SK-N-SH (cell line): ENCODE measurements at regions of chr2 and their contacts with region 1.

Region 1: DNA sequence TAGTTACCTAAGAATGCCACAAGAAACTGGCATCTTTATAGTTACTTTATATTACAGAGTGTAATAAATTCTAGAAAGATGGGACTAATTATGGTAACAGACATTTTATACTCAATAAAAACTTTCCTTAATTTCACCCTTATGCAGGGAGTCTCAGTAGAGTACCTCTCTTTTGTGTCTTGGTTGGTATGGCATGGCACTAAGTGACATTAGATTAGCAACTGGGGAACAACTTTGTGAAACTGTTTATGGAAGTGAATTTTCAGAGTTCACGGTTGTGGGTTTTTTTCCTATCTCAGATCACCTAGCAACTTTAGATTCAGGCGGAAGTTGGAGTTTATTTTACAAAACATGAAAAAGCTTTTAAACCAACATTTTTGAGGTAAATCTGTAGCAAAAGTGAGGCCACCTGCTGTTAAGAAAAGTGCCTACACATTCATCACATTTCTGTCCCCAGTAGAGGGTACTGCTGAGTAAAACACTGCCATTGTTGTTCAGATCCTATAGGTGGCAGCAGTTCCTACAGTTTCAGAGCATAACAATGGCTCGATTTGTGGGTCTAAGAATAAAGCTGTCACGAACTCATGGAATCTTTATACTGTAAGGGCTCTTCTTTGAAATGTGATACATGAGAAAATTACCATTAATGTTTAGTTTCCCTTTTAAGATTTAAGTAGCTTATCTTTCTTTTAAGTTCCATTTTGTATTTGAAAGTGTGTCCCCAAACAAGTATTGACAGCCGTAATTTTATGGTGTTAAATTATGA is 117.6 kb downstream of the CAMKMT start:
- DNase-seq: peak; percentile 81
- H3K4me3 ChIP-seq: peak overlapping the region in 1 of 2 experiments; percentile 23; a peak in 1 of 4 replicates
- H3K27ac ChIP-seq: peak overlapping the region in 1 of 2 experiments; percentile 65; a peak in 2 of 4 replicates
- H3K4me1 ChIP-seq: peaks cover 0 to 12% of the 10 kb centered on the region in 2 experiments; a peak in 2 of 4 replicates
- H3K27me3 ChIP-seq: no peaks in the 10 kb centered on the region
- CTCF ChIP-seq: peak; percentile 100
- EP300 ChIP-seq: peak; percentile 15 to 49; a peak in 1 of 4 replicates
- RAD21 ChIP-seq: peak; percentile 100

Region 2: DNA sequence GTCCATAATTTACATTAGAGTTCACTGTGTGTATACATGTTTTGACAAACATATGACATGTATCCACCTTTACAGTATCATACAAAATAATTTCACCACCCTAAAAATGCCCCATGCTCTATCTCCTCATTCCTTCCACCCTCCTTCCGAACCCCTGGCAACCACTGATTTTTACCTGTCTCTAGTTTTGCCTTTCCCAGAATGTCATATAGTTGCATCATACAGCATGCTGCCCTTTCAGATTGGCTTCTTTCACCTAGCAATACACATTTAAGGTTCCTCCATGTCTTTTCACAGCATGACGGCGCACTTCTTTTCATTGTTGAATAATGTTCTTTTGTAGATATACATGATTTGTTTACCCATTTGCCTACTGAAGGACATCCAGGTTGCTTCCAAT is 493.9 kb before region 1 on chr2:
- CTCF ChIA-PET with region 1: no interaction called
- POLR2A ChIA-PET with region 1: no interaction called
- DNase-seq: no peak
- H3K4me3 ChIP-seq: no peak overlapping the region
- H3K27ac ChIP-seq: no peak overlapping the region
- H3K4me1 ChIP-seq: no peaks in the 10 kb centered on the region
- H3K27me3 ChIP-seq: no peaks in the 10 kb centered on the region
- CTCF ChIP-seq: no peak
- EP300 ChIP-seq: no peak
- RAD21 ChIP-seq: no peak

Region 3: DNA sequence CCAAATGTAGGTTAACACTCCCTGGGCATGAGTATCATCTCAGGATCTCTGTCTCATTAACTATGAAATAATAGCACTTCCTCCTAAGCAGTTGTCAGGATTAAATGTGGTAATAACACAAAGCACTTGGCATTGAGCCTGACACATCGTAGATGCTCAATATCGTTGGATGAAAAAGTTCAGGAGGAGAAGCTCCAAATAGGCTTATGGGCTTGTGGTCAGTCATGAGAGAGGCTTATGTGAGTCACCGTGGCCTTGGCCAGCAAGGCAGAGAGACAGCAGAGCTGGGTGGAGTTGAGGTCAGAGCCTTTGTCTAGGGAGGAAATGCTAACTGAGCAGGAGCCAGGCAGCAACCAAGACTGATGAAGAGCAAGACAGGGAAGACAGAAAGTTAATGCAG is 379.0 kb before region 1 on chr2:
- CTCF ChIA-PET with region 1: no interaction called
- POLR2A ChIA-PET with region 1: no interaction called
- DNase-seq: no peak
- H3K4me3 ChIP-seq: no peak overlapping the region
- H3K27ac ChIP-seq: peak overlapping the region in 1 of 2 experiments; percentile 23; a peak in 2 of 4 replicates
- H3K4me1 ChIP-seq: peaks cover 0 to 4% of the 10 kb centered on the region in 2 experiments; a peak in 3 of 4 replicates
- H3K27me3 ChIP-seq: no peaks in the 10 kb centered on the region
- CTCF ChIP-seq: no peak
- EP300 ChIP-seq: peak in 1 of 2 experiments; percentile 52; a peak in 1 of 4 replicates
- RAD21 ChIP-seq: no peak

Region 4: GRCh38 chr2:44286517-44287245 is 192.6 kb before region 1 on chr2:
- CTCF ChIA-PET with region 1: no interaction called
- POLR2A ChIA-PET with region 1: no interaction called
- DNase-seq: no peak
- H3K4me3 ChIP-seq: no peak overlapping the region
- H3K27ac ChIP-seq: no peak overlapping the region
- H3K4me1 ChIP-seq: peaks cover 3 to 9% of the 10 kb centered on the region in 2 experiments; a peak in 2 of 4 replicates
- H3K27me3 ChIP-seq: 0 out of 2 replicates have a peak, but pooled peaks cover 4% of the 10 kb centered on the region
- CTCF ChIP-seq: no peak
- EP300 ChIP-seq: no peak
- RAD21 ChIP-seq: no peak

Region 5: GRCh38 chr2:44377486-44377885 is 101.8 kb before region 1 on chr2:
- CTCF ChIA-PET with region 1: interaction called, 12 read pairs
- POLR2A ChIA-PET with region 1: no interaction called
- DNase-seq: no peak
- H3K4me3 ChIP-seq: no peak overlapping the region
- H3K27ac ChIP-seq: no peak overlapping the region
- H3K4me1 ChIP-seq: no peaks in the 10 kb centered on the region
- H3K27me3 ChIP-seq: no peaks in the 10 kb centered on the region
- CTCF ChIP-seq: no peak
- EP300 ChIP-seq: no peak
- RAD21 ChIP-seq: no peak

Region 6: GRCh38 chr2:44498551-44498950 is 19.2 kb after region 1 on chr2:
- CTCF ChIA-PET with region 1: interaction called, 95 read pairs
- POLR2A ChIA-PET with region 1: no interaction called
- DNase-seq: no peak
- H3K4me3 ChIP-seq: no peak overlapping the region
- H3K27ac ChIP-seq: peak overlapping the region in 1 of 2 experiments; percentile 1; a peak in 1 of 4 replicates
- H3K4me1 ChIP-seq: no peaks in the 10 kb centered on the region
- H3K27me3 ChIP-seq: no peaks in the 10 kb centered on the region
- CTCF ChIP-seq: no peak
- EP300 ChIP-seq: no peak
- RAD21 ChIP-seq: no peak

Region 7: GRCh38 chr2:44602446-44602845 is 123.1 kb after region 1 on chr2:
- CTCF ChIA-PET with region 1: interaction called, 28 read pairs
- POLR2A ChIA-PET with region 1: no interaction called
- DNase-seq: no peak
- H3K4me3 ChIP-seq: no peak overlapping the region
- H3K27ac ChIP-seq: no peak overlapping the region
- H3K4me1 ChIP-seq: peaks cover 0 to 17% of the 10 kb centered on the region in 2 experiments; a peak in 2 of 4 replicates
- H3K27me3 ChIP-seq: no peaks in the 10 kb centered on the region
- CTCF ChIP-seq: no peak
- EP300 ChIP-seq: no peak
- RAD21 ChIP-seq: no peak

Region 8: DNA sequence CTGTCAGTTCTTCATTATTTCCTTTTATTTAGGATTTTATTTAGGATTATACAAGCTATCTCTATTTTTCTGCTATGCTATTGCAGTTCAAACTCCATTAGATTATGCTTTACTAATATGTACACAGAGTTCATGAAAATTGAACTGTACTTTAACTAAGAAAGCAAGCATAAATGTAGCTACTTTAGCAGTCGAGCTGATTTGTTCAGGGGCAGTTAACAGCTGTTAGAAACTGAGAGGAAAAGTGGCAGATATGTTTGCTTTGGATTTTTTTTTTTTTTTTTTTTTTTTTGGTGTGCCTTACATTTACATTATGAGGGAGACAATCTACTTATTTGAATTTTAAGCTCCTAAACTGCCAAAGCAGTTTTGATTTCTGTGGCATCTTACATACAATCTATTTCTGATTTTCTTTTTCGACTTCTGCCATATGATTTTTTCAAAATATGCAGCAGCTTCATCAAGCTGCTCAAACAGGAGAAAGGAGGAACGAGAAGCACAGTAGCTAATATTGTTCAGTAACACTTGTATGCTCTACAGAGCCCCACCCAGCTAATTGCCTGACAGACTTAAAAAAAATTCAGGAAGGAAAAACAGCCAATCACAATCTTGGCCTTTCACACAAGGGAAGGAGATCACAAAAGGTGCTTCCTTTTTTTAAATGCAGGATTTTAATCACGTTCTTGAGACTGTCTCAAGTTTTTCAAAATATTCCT is 228.8 kb after region 1 on chr2:
- CTCF ChIA-PET with region 1: interaction called, 147 read pairs
- POLR2A ChIA-PET with region 1: interaction called, 3 read pairs
- DNase-seq: no peak
- H3K4me3 ChIP-seq: no peak overlapping the region
- H3K27ac ChIP-seq: peak overlapping the region in 1 of 2 experiments; percentile 100; a peak in 2 of 4 replicates
- H3K4me1 ChIP-seq: peaks cover 0 to 74% of the 10 kb centered on the region in 2 experiments; a peak in 2 of 4 replicates
- H3K27me3 ChIP-seq: no peaks in the 10 kb centered on the region
- CTCF ChIP-seq: no peak
- EP300 ChIP-seq: no peak
- RAD21 ChIP-seq: no peak

Region 9: DNA sequence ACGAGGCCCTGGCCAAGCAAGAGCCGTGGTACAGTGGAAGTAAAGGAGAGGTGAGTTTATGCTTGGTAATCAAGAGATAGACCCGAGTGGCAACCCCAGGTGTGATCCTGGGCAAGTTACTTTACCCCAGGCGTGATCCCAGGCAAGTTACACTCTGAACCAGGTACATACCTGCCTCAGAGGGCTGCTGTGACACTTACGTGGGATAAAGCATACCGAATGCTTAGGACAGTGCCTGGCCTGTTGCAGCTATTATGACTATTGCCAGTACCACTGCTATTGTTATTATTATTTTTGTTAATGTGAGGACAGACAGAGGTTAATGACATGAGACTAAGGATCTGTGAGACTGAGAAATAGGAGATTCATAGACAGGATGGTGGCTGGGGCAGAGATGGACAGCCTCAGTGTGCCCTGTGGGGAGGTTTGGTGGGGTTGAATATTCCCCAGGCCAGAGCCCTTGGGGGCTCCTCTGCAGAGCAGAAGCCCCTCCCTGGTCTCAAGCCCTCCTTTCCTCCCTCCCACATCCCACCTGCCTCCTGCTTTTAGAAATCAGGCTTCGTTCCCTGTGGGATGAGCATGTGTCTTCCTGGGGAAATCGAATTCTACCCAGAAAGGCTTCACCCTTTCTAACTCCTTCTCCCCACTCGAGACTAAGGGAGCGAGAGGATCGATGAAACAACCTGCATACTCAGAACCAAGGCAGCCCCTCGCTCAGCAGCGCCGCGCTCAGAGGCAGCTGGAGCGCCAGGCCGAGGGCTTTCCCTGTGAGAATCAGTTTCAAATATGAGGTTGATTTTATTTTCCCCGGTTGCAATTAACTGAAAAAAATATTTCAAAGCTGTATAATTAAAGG is 400.2 kb after region 1 on chr2:
- CTCF ChIA-PET with region 1: interaction called, 20 read pairs
- POLR2A ChIA-PET with region 1: no interaction called
- DNase-seq: peak; percentile 46
- H3K4me3 ChIP-seq: no peak overlapping the region; a peak in 1 of 4 replicates
- H3K27ac ChIP-seq: no peak overlapping the region
- H3K4me1 ChIP-seq: peaks cover 0 to 20% of the 10 kb centered on the region in 2 experiments; a peak in 2 of 4 replicates
- H3K27me3 ChIP-seq: peaks cover 21% of the 10 kb centered on the region
- CTCF ChIP-seq: no peak
- EP300 ChIP-seq: no peak
- RAD21 ChIP-seq: no peak